Activated naive CD8-positive, alpha-beta T cell treated with anti-CD3 and anti-CD28 coated beads, Interleukin-2, amount 10 ng/mL, durations not matched to agents 7 days and 5 days (primary cell): ENCODE measurements at regions of chr1 and their contacts with region 1.

Region 1: GRCh38 chr1:32650752-32651460 is at the start of gene RBBP4:
- DNase-seq: peak; percentile 100
- ATAC-seq: peak; percentile 89
- H3K4me3 Mint-ChIP-seq: peak within 1 kb of the TSS; percentile 91
- H3K27ac Mint-ChIP-seq: peak within 1 kb of the TSS; percentile 98
- H3K4me1 Mint-ChIP-seq: peaks cover 33% of the 10 kb centered on the region
- H3K27me3 Mint-ChIP-seq: no peaks in the 10 kb centered on the region
- total RNA-seq, gene RBBP4: 273 to 280 TPM

Region 2: DNA sequence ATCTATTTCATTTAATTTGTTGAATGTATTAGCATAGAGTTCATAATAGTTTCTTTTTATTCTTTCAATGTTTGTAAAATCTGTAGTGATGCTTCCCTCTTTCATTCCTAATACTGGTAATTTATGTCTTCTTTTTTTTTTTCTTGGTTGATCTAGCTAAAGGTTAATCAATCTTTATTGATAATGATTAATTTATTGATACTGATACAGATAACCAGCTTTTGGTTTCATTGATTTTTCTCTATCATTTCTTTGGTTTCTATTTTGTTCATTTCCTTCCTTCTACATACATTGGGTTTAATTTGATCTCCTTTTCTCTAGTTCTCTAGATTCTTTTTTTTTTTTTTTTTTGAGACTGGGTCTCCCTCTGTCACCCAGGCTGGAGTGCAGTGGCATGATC is 78.2 kb before region 1 on chr1:
- POLR2A ChIA-PET with region 1: no interaction called
- DNase-seq: no peak
- ATAC-seq: no peak
- H3K4me3 Mint-ChIP-seq: no peak overlapping the region
- H3K27ac Mint-ChIP-seq: no peak overlapping the region
- H3K4me1 Mint-ChIP-seq: no peaks in the 10 kb centered on the region
- H3K27me3 Mint-ChIP-seq: peaks cover 16% of the 10 kb centered on the region

Region 3: GRCh38 chr1:32627596-32628162 is 23.2 kb before region 1 on chr1:
- POLR2A ChIA-PET with region 1: interaction called, 14 read pairs
- DNase-seq: no peak
- ATAC-seq: peak; percentile 83
- H3K4me3 Mint-ChIP-seq: peak overlapping the region; percentile 56
- H3K27ac Mint-ChIP-seq: peak overlapping the region; percentile 81
- H3K4me1 Mint-ChIP-seq: peaks cover 29% of the 10 kb centered on the region
- H3K27me3 Mint-ChIP-seq: no peaks in the 10 kb centered on the region

Region 4: GRCh38 chr1:32741413-32742198 is 90.7 kb after region 1 on chr1:
- POLR2A ChIA-PET with region 1: no interaction called
- DNase-seq: peak; percentile 41
- ATAC-seq: peak; percentile 11
- H3K4me3 Mint-ChIP-seq: peak overlapping the region; percentile 57
- H3K27ac Mint-ChIP-seq: no peak overlapping the region
- H3K4me1 Mint-ChIP-seq: no peaks in the 10 kb centered on the region
- H3K27me3 Mint-ChIP-seq: peaks cover 40% of the 10 kb centered on the region

Region 5: GRCh38 chr1:32817159-32817814 is 166.4 kb after region 1 on chr1 and contains the starts of genes S100PBP and YARS1:
- POLR2A ChIA-PET with region 1: interaction called, 11 read pairs
- DNase-seq: peak; percentile 100
- ATAC-seq: peak; percentile 89
- H3K4me3 Mint-ChIP-seq: peak within 1 kb of the TSS; percentile 97
- H3K27ac Mint-ChIP-seq: peak within 1 kb of the TSS; percentile 88
- H3K4me1 Mint-ChIP-seq: peaks cover 40% of the 10 kb centered on the region
- H3K27me3 Mint-ChIP-seq: no peaks in the 10 kb centered on the region
- total RNA-seq, gene S100PBP: 75.8 to 78.5 TPM
- total RNA-seq, gene YARS1: 180 to 181 TPM

Region 6: GRCh38 chr1:32874860-32875716 is 224.2 kb after region 1 on chr1:
- POLR2A ChIA-PET with region 1: no interaction called
- DNase-seq: no peak
- ATAC-seq: no peak
- H3K4me3 Mint-ChIP-seq: no peak overlapping the region
- H3K27ac Mint-ChIP-seq: no peak overlapping the region
- H3K4me1 Mint-ChIP-seq: peaks cover 3% of the 10 kb centered on the region
- H3K27me3 Mint-ChIP-seq: peaks cover 46% of the 10 kb centered on the region

Region 7: GRCh38 chr1:32886004-32886827 is 235.3 kb after region 1 on chr1 and contains the start of gene HPCA:
- POLR2A ChIA-PET with region 1: no interaction called
- DNase-seq: peak; percentile 82
- ATAC-seq: peak; percentile 85
- H3K4me3 Mint-ChIP-seq: no peak within 1 kb of the TSS
- H3K27ac Mint-ChIP-seq: no peak within 1 kb of the TSS
- H3K4me1 Mint-ChIP-seq: no peaks in the 10 kb centered on the region
- H3K27me3 Mint-ChIP-seq: peaks cover 68% of the 10 kb centered on the region
- total RNA-seq, gene HPCA: 0.40 TPM in 1 of 2 experiments, not detected in the other